Transverse colon (tissue), 4 donors: ENCODE measurements at regions of chr7 and their contacts with region 1.

Region 1: GRCh38 chr7:65975814-65976445 is 6.1 kb downstream of the GUSB start:
- DNase-seq: no peak
- H3K4me3 ChIP-seq: no peak overlapping the region
- H3K27ac ChIP-seq: no peak overlapping the region
- H3K4me1 ChIP-seq: peaks cover 0 to 8% (median 6%) of the 10 kb centered on the region in 4 donors
- H3K27me3 ChIP-seq: no peaks in the 10 kb centered on the region
- CTCF ChIP-seq: no peak
- EP300 ChIP-seq: no peak
- POLR2A ChIP-seq: no peak

Region 2: GRCh38 chr7:66899552-66900280 is 923.8 kb after region 1 on chr7:
- in situ Hi-C with region 1: no loop called
- intact Hi-C with region 1: loop called (anchors 5 kb)
- DNase-seq: no peak
- H3K4me3 ChIP-seq: no peak overlapping the region
- H3K27ac ChIP-seq: no peak overlapping the region
- H3K4me1 ChIP-seq: no peaks in the 10 kb centered on the region
- H3K27me3 ChIP-seq: no peaks in the 10 kb centered on the region
- CTCF ChIP-seq: no peak
- EP300 ChIP-seq: no peak
- POLR2A ChIP-seq: no peak